Prostate gland (tissue), 2 donors: ENCODE measurements at regions of chr9 and their contacts with region 1.

Region 1: GRCh38 chr9:6197330-6197729 is 18.3 kb upstream of the IL33 start:
- DNase-seq: no peak
- H3K4me3 ChIP-seq: no peak overlapping the region
- H3K27ac ChIP-seq: no peak overlapping the region
- H3K4me1 ChIP-seq: no peaks in the 10 kb centered on the region
- H3K27me3 ChIP-seq: no peaks in the 10 kb centered on the region
- CTCF ChIP-seq: peak in 1 of 4 experiments; percentile 31
- POLR2A ChIP-seq: no peak

Region 2: GRCh38 chr9:6305954-6306563 is 108.7 kb after region 1 on chr9:
- intact Hi-C with region 1: loop called (anchors 2 kb)
- DNase-seq: no peak
- H3K4me3 ChIP-seq: no peak overlapping the region
- H3K27ac ChIP-seq: no peak overlapping the region
- H3K4me1 ChIP-seq: no peaks in the 10 kb centered on the region
- H3K27me3 ChIP-seq: no peaks in the 10 kb centered on the region
- CTCF ChIP-seq: peak in 3 of 4 experiments; percentile 58 to 75 (median 72)
- POLR2A ChIP-seq: no peak